Activated B cell treated with CpG ODN at 0.5 μM for 24 hours (primary cell): ENCODE measurements at regions of chr2 and their contacts with region 1.

Region 1: DNA sequence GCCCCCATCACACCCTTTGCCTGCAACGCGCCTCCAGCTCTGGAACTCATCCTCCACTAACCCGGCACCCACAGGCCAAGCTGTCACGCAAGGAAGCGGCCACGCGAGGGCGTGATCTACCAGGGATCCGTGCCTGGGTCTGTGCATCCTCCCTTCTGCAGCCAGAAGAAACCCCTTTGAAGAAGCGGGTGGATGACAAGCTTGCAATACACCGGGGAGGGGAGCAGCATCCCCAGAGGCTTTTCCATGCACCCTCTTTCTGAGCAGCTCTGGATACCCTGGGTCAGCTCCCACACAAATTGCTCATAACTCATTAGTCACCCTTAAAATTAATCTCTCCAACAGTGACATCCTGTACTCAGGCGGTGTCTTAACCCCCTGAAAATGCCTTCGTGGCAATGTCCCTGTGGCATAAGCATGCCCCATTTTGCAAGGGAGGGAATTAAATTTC is 47.6 kb downstream of the PDCL3 start:
- DNase-seq: peak; percentile 25
- ATAC-seq: peak; percentile 58
- H3K4me3 Mint-ChIP-seq: no peak overlapping the region
- H3K27ac Mint-ChIP-seq: no peak overlapping the region
- H3K4me1 Mint-ChIP-seq: peaks cover 2% of the 10 kb centered on the region
- H3K27me3 Mint-ChIP-seq: peaks cover 24% of the 10 kb centered on the region
- CTCF ChIP-seq: no peak

Region 2: GRCh38 chr2:100984892-100985379 is 374.5 kb after region 1 on chr2:
- CTCF ChIA-PET with region 1: interaction called, 47 read pairs
- POLR2A ChIA-PET with region 1: no interaction called
- intact Hi-C with region 1: loop called (anchors 1 kb)
- DNase-seq: peak; percentile 61
- ATAC-seq: peak; percentile 88
- H3K4me3 Mint-ChIP-seq: no peak overlapping the region
- H3K27ac Mint-ChIP-seq: no peak overlapping the region
- H3K4me1 Mint-ChIP-seq: no peaks in the 10 kb centered on the region
- H3K27me3 Mint-ChIP-seq: peaks cover 8% of the 10 kb centered on the region
- CTCF ChIP-seq: peak; percentile 76